HEK293 (cell line): ENCODE measurements at regions of chr2 and their contacts with region 1.

Region 1: GRCh38 chr2:201860636-201861066 is 54.3 kb downstream of the CDK15 start:
- H3K4me3 ChIP-seq: no peak overlapping the region
- H3K27ac ChIP-seq: no peak overlapping the region
- H3K4me1 ChIP-seq: peaks cover 6% of the 10 kb centered on the region
- CTCF ChIP-seq: peak; percentile 76

Region 2: DNA sequence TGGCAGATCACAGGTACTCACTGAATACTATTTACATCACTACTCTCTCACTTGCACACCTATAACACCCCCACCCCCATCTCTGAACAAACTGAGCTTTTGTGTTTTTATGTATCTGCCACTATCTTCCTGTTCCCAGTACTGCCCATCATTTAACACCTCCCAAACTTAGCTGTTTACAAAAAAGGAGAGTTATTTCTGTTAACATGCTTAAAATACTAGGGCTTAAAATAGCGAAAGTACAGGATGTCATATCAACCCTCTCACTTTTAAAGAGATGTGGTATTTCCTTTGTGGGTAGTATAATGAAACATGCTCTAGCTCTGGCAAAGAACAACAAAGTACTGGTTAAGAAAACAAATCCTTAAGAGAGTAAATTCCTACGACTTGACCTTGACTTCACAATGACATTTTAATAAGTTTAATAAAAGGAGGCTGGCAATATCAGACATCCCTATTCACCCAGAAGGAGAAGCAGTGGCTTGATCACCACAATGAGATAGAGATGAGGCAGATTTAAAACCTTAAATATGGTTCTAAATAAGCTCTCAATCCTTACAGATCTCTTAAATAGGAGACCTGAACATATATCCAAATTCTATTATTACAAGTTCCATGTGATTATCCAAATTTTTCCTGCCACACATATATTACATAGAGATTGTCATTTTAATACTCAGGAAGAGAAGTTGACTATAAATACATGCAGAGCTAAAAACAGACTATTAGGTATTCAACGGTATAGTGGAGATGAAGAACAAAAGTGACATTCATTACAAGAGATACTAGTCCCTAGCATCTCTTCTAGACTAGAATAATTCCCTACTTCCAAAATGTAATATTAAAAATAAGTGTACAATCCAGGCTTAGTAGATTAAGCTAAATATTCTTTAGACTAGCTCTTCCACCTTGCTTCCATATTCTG is 446.3 kb before region 1 on chr2:
- CTCF ChIA-PET with region 1: no interaction called
- POLR2A ChIA-PET with region 1: no interaction called
- H3K4me3 ChIP-seq: no peak overlapping the region
- H3K27ac ChIP-seq: no peak overlapping the region
- H3K4me1 ChIP-seq: peaks cover 22% of the 10 kb centered on the region
- CTCF ChIP-seq: no peak

Region 3: DNA sequence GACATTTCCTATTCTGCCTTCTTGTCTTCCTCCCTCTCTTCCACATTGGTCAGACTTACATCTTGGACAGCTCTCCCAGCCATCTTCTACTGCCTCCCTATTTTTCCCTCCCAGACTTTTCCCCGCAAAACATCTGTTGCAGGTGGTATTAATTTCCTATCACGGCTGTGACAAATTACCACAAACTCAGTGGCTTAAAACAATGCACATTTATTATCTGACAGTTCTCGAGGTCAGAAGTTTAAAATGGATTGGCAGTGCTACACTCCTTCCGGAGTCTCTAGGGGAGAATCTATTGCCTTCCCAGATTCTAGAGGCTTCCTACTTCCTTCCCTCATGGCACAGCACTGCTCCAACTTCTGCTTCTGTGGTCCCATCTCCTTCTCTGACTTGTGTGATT is 375.8 kb before region 1 on chr2:
- CTCF ChIA-PET with region 1: no interaction called
- POLR2A ChIA-PET with region 1: no interaction called
- H3K4me3 ChIP-seq: no peak overlapping the region
- H3K27ac ChIP-seq: no peak overlapping the region
- H3K4me1 ChIP-seq: no peaks in the 10 kb centered on the region
- CTCF ChIP-seq: no peak

Region 4: DNA sequence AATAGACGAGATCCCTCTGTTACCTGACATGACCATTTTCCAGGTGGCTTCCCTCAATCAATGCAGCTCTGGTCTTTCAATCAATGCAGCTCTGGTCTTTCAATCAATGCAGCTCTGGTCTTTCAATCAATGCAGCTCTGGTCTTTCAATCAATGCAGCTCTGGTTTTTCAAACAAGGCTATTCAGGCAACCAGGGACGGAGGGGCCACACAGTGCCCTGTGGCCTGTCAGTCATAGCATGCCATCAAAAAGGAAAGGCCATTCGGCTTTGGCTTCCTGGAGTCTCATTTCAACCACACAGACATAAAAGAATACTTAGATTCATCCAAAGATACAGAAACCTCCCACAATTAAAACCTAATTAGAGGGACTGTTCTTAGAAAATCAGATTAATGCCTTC is 175.5 kb before region 1 on chr2:
- CTCF ChIA-PET with region 1: no interaction called
- POLR2A ChIA-PET with region 1: no interaction called
- H3K4me3 ChIP-seq: no peak overlapping the region
- H3K27ac ChIP-seq: no peak overlapping the region
- H3K4me1 ChIP-seq: no peaks in the 10 kb centered on the region
- CTCF ChIP-seq: no peak

Region 5: GRCh38 chr2:201795607-201796477 is 64.8 kb before region 1 on chr2:
- CTCF ChIA-PET with region 1: interaction called, 21 read pairs
- POLR2A ChIA-PET with region 1: no interaction called
- H3K4me3 ChIP-seq: no peak overlapping the region
- H3K27ac ChIP-seq: no peak overlapping the region
- H3K4me1 ChIP-seq: no peaks in the 10 kb centered on the region
- CTCF ChIP-seq: peak; percentile 81

Region 6: DNA sequence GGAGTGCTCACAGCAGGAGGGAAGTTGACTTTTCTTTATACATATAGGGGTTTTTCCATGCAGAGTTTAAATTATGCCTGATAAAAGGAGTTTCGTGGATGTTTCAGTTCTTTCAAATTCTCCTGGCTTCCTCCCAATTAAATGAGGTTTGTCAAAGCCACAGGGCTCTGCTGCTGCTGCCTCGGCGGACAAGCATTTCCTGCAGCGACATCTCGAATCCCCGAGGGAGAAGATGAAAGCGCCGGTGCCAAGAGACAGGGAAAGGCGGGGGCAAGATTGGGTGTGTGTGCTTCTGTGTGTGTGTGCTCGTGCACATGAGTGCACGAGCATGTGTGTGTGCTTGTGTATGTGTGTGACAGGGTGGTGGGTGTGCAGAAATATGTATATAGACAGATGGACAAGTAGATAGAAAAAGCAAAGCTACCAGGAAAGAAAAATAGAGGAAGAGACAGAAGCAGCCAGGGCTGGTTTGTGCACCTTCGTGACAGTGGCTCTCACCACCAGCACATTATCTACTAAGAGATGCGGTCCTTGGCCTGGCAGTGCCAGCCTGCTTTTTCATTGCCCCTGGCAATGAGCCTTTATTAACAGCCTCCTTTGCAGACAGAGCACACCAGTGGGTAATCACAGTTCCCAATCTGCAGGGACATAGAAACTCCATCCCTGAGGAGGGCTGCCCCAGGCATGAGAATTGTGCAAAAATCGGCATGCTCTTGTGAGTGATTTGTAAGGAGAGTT is 21.9 kb after region 1 on chr2:
- CTCF ChIA-PET with region 1: interaction called, 11 read pairs
- POLR2A ChIA-PET with region 1: interaction called, 5 read pairs
- H3K4me3 ChIP-seq: no peak overlapping the region
- H3K27ac ChIP-seq: no peak overlapping the region; the same call in 1 of the 2 replicates
- H3K4me1 ChIP-seq: peaks cover 28% of the 10 kb centered on the region
- CTCF ChIP-seq: no peak

Region 7: DNA sequence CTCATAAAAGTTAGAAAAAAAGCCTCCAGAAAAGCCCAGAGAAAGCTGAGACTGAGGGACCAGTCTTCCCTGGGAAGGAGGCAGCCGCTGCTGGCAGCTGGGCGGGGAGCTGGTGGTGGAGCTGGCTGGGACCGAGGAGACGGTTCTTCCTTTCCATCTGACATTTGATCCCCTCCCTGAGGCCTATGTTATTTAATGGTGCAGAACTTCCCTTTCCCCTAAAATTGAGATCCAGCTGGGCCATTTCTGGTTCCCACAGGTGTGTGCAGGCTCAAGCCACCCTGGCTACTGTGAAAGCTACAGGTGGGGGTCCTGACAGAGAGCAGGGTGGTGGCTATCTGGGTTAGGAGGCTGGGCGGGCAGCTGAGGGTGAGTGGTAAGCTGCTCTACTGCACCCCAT is 91.5 kb after region 1 on chr2:
- CTCF ChIA-PET with region 1: interaction called, 13 read pairs
- POLR2A ChIA-PET with region 1: no interaction called
- H3K4me3 ChIP-seq: no peak overlapping the region
- H3K27ac ChIP-seq: no peak overlapping the region
- H3K4me1 ChIP-seq: no peaks in the 10 kb centered on the region
- CTCF ChIP-seq: no peak

Region 8: GRCh38 chr2:202104278-202104870 is 243.7 kb after region 1 on chr2:
- CTCF ChIA-PET with region 1: interaction called, 13 read pairs
- POLR2A ChIA-PET with region 1: no interaction called
- H3K4me3 ChIP-seq: no peak overlapping the region
- H3K27ac ChIP-seq: no peak overlapping the region
- H3K4me1 ChIP-seq: peaks cover 3% of the 10 kb centered on the region; the same call in 1 of the 2 replicates
- CTCF ChIP-seq: peak; percentile 72

Region 9: GRCh38 chr2:202158796-202159195 is 298.1 kb after region 1 on chr2:
- CTCF ChIA-PET with region 1: interaction called, 17 read pairs
- POLR2A ChIA-PET with region 1: no interaction called
- H3K4me3 ChIP-seq: no peak overlapping the region
- H3K27ac ChIP-seq: no peak overlapping the region
- H3K4me1 ChIP-seq: no peaks in the 10 kb centered on the region; the same call in none of the 2 replicates
- CTCF ChIP-seq: 0 out of 2 replicates have a peak, but pooled peaks have one; percentile 49

Region 10: DNA sequence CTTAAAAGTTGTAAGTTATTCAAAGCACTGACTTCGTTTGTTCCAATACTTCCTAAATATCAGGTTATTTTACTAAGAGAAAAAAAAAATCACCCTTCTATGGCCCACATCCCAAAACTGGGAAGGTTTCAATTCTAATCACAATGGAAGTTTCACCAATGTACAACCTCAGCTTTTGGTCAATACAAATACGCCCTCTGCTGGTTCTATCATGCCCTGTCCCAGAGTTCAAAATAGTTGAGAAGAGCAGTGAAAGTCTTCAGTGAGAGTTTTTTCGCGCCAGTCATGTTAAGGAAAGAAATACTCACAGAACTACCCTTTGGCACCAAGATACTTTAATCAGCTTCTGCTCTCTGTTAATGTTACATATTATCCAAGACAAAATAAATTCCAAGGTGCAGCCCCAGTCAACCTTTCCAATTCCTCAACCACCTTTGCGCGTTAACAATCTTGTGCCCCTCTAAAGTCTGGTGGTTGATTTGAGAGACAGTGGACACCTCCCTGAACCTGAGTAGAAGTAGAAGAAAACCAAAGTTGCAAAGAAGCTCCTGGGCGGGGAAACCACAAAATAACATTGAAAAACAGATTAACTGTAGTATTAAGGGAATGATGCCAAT is 317.8 kb after region 1 on chr2:
- CTCF ChIA-PET with region 1: interaction called, 47 read pairs
- POLR2A ChIA-PET with region 1: interaction called, 4 read pairs
- H3K4me3 ChIP-seq: no peak overlapping the region
- H3K27ac ChIP-seq: no peak overlapping the region
- H3K4me1 ChIP-seq: no peaks in the 10 kb centered on the region
- CTCF ChIP-seq: 0 out of 2 replicates have a peak, but pooled peaks have one; percentile 34